GM12878 (cell line): ENCODE measurements at regions of chrX and their contacts with region 1.

Region 1: DNA sequence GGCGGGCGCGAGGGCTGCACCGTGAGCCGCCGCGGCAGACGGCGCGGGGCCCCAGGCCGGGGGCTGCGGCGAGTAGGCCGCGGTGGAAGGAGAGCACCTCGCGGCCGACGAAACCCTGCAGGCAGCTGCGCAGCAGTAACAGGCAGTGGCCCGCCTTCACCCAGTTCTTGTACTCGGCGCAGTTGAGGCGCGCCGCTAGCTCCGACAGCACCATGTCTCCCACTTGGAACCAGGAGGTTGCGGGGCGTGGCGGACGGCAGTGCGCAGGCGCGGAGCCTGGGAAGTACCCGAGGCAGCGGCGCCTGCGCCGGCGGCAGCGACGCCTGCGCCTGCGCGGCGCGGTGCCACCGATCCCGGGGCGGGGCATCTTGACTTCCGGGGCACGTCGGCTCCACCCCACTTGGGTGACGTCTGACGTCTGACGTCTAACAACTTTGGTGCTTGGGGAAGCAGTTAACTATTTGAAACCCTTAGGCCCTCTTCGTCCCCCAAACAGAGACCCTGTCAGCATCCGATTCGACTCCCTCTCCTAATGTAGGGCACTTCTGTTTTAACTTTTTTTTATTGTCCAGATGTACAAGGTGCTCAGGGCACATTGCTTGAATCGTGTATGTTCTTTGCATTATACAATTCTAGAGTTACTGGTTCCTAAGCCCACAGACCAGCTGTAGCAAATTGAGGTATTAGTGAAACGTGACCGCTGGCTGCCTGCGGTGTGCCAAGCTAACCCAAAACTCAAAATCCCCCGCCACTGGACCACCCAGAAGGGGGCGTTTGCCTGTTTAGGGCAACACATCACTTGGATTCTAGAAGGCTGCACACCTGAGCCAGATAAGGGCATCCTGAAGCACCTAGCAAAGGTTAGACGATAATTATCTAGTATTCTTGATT is at the start of gene CXorf38:
- DNase-seq: peak; percentile 68
- ATAC-seq: peak; percentile 85
- H3K4me3 ChIP-seq: peak within 1 kb of the TSS; percentile 91
- H3K27ac ChIP-seq: peak within 1 kb of the TSS; percentile 70
- H3K4me1 ChIP-seq: no peaks in the 10 kb centered on the region
- H3K27me3 ChIP-seq: no peaks in the 10 kb centered on the region
- CTCF ChIP-seq: no peak
- EP300 ChIP-seq: no peak
- POLR2A ChIP-seq: peak; percentile 92
- RAD21 ChIP-seq: no peak
- polyA plus RNA-seq, gene CXorf38: 2.2 to 6.0 TPM

Region 2: GRCh38 chrX:40539214-40540142 is 108.1 kb before region 1 on chrX:
- CTCF ChIA-PET with region 1: interaction called, 53 read pairs
- POLR2A ChIA-PET with region 1: interaction called, 3 read pairs
- RAD21 ChIA-PET with region 1: interaction called, 42 read pairs
- SMC1A ChIA-PET with region 1: interaction called, 34 read pairs
- in situ Hi-C with region 1: loop called (anchors 5 kb)
- intact Hi-C with region 1: loop called (anchors 2 kb)
- DNase-seq: peak; percentile 56
- ATAC-seq: peak; percentile 90
- H3K4me3 ChIP-seq: no peak overlapping the region
- H3K27ac ChIP-seq: peak overlapping the region; percentile 59
- H3K4me1 ChIP-seq: peaks cover 11% of the 10 kb centered on the region
- H3K27me3 ChIP-seq: peaks cover 0 to 2% of the 10 kb centered on the region in 2 experiments; a peak in 2 of 4 replicates
- CTCF ChIP-seq: peak; percentile 30 to 51 (median 48); a peak in 5 of 6 replicates
- EP300 ChIP-seq: no peak
- POLR2A ChIP-seq: no peak
- RAD21 ChIP-seq: 0 out of 2 replicates have a peak, but pooled peaks have one; percentile 26

Region 3: DNA sequence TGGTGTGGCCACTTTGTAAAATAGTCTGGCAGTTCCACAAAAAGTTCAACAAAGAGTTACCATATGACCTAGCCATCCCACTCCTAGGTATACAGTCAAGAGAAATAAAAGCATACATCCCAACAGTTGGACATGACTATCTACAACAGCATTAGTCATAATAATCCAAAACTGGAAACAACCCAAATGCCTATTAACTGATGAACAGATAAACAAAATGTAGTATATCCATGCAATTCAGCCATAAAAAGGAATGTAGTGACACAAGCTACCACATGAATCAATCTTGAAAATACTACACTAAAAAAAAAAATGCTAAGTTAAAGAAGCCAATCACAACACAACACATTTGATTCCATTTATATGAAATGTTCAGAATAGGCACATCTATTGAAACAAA is 71.7 kb after region 1 on chrX:
- CTCF ChIA-PET with region 1: interaction called, 11 read pairs
- POLR2A ChIA-PET with region 1: interaction called, 3 read pairs
- RAD21 ChIA-PET with region 1: no interaction called
- SMC1A ChIA-PET with region 1: interaction called, 3 read pairs
- in situ Hi-C with region 1: no loop called
- intact Hi-C with region 1: no loop called
- DNase-seq: no peak
- ATAC-seq: no peak
- H3K4me3 ChIP-seq: no peak overlapping the region
- H3K27ac ChIP-seq: no peak overlapping the region
- H3K4me1 ChIP-seq: no peaks in the 10 kb centered on the region
- H3K27me3 ChIP-seq: no peaks in the 10 kb centered on the region
- CTCF ChIP-seq: no peak
- EP300 ChIP-seq: no peak
- POLR2A ChIP-seq: no peak
- RAD21 ChIP-seq: no peak

Region 4: GRCh38 chrX:40784516-40785151 is 137.1 kb after region 1 on chrX:
- CTCF ChIA-PET with region 1: interaction called, 10 read pairs
- POLR2A ChIA-PET with region 1: no interaction called
- RAD21 ChIA-PET with region 1: no interaction called
- SMC1A ChIA-PET with region 1: interaction called, 6 read pairs
- in situ Hi-C with region 1: no loop called
- intact Hi-C with region 1: no loop called
- DNase-seq: no peak
- ATAC-seq: no peak
- H3K4me3 ChIP-seq: no peak overlapping the region
- H3K27ac ChIP-seq: no peak overlapping the region
- H3K4me1 ChIP-seq: no peaks in the 10 kb centered on the region
- H3K27me3 ChIP-seq: no peaks in the 10 kb centered on the region; a peak in 1 of 4 replicates
- CTCF ChIP-seq: no peak
- EP300 ChIP-seq: no peak
- POLR2A ChIP-seq: no peak
- RAD21 ChIP-seq: no peak

Region 5: DNA sequence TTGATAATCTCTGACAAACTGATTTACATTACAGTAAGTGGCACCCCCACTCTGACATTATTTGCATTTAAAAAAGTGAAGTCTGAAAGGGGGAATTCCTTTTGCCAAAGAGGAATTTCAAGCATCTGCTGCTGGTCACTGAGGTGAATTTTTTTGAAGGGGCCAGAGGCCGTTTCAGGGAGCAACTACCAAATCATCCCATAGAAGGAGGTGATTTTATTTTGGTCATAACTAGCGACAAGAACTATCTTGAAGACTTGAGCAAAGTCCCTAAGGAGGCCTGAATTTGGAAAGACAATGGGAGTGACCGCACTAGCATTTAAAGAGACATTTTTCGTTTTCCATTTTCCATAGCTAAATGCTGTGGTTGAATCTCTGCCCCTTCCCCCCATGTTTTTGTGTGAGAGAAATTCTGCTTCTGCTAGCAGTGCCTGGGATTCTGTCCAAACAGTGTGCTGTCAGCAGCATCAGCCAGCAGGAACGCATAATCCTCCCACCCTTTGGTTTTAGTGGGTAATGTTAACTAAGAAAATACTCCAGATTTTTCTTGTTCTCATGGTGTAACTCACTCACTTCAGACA is 197.9 kb after region 1 on chrX:
- CTCF ChIA-PET with region 1: no interaction called
- POLR2A ChIA-PET with region 1: no interaction called
- RAD21 ChIA-PET with region 1: no interaction called
- SMC1A ChIA-PET with region 1: no interaction called
- in situ Hi-C with region 1: no loop called
- intact Hi-C with region 1: no loop called
- DNase-seq: no peak
- ATAC-seq: no peak
- H3K4me3 ChIP-seq: no peak overlapping the region
- H3K27ac ChIP-seq: peak overlapping the region; percentile 20; the same call in 1 of the 2 replicates
- H3K4me1 ChIP-seq: no peaks in the 10 kb centered on the region
- H3K27me3 ChIP-seq: no peaks in the 10 kb centered on the region
- CTCF ChIP-seq: no peak
- EP300 ChIP-seq: no peak
- POLR2A ChIP-seq: no peak
- RAD21 ChIP-seq: no peak

Region 6: GRCh38 chrX:40922307-40922706 is 274.8 kb after region 1 on chrX:
- CTCF ChIA-PET with region 1: interaction called, 7 read pairs
- POLR2A ChIA-PET with region 1: no interaction called
- RAD21 ChIA-PET with region 1: no interaction called
- SMC1A ChIA-PET with region 1: interaction called, 9 read pairs
- in situ Hi-C with region 1: no loop called
- intact Hi-C with region 1: loop called (anchors 10 kb)
- DNase-seq: no peak
- ATAC-seq: no peak
- H3K4me3 ChIP-seq: no peak overlapping the region
- H3K27ac ChIP-seq: no peak overlapping the region
- H3K4me1 ChIP-seq: no peaks in the 10 kb centered on the region
- H3K27me3 ChIP-seq: no peaks in the 10 kb centered on the region
- CTCF ChIP-seq: peak; percentile 21 to 40 (median 32); a peak in 4 of 6 replicates
- EP300 ChIP-seq: no peak
- POLR2A ChIP-seq: no peak
- RAD21 ChIP-seq: peak; percentile 40; the same call in 1 of the 2 replicates

Region 7: GRCh38 chrX:41180194-41180908 is 532.8 kb after region 1 on chrX:
- CTCF ChIA-PET with region 1: interaction called, 10 read pairs
- POLR2A ChIA-PET with region 1: no interaction called
- RAD21 ChIA-PET with region 1: interaction called, 10 read pairs
- SMC1A ChIA-PET with region 1: interaction called, 26 read pairs
- in situ Hi-C with region 1: no loop called
- intact Hi-C with region 1: no loop called
- DNase-seq: peak; percentile 59
- ATAC-seq: peak; percentile 83
- H3K4me3 ChIP-seq: 0 out of 2 replicates have a peak overlapping the region, but pooled peaks have one; percentile 8
- H3K27ac ChIP-seq: peak overlapping the region; percentile 45
- H3K4me1 ChIP-seq: peaks cover 18% of the 10 kb centered on the region
- H3K27me3 ChIP-seq: no peaks in the 10 kb centered on the region
- CTCF ChIP-seq: peak; percentile 75 to 87 (median 81)
- EP300 ChIP-seq: 0 out of 4 replicates have a peak, but pooled peaks of 1 of the 2 experiments have one; percentile 16
- POLR2A ChIP-seq: no peak
- RAD21 ChIP-seq: peak; percentile 84